SK-N-SH (cell line): ENCODE measurements at regions of chr11 and their contacts with region 1.

Region 1: GRCh38 chr11:44694443-44694842 is 32.3 kb upstream of the TSPAN18 start:
- DNase-seq: no peak
- H3K4me3 ChIP-seq: no peak overlapping the region
- H3K27ac ChIP-seq: peak overlapping the region in 1 of 2 experiments; percentile 93; a peak in 2 of 4 replicates
- H3K4me1 ChIP-seq: peaks cover 0 to 46% of the 10 kb centered on the region in 2 experiments; a peak in 2 of 4 replicates
- H3K27me3 ChIP-seq: no peaks in the 10 kb centered on the region
- CTCF ChIP-seq: no peak
- EP300 ChIP-seq: no peak
- RAD21 ChIP-seq: no peak

Region 2: DNA sequence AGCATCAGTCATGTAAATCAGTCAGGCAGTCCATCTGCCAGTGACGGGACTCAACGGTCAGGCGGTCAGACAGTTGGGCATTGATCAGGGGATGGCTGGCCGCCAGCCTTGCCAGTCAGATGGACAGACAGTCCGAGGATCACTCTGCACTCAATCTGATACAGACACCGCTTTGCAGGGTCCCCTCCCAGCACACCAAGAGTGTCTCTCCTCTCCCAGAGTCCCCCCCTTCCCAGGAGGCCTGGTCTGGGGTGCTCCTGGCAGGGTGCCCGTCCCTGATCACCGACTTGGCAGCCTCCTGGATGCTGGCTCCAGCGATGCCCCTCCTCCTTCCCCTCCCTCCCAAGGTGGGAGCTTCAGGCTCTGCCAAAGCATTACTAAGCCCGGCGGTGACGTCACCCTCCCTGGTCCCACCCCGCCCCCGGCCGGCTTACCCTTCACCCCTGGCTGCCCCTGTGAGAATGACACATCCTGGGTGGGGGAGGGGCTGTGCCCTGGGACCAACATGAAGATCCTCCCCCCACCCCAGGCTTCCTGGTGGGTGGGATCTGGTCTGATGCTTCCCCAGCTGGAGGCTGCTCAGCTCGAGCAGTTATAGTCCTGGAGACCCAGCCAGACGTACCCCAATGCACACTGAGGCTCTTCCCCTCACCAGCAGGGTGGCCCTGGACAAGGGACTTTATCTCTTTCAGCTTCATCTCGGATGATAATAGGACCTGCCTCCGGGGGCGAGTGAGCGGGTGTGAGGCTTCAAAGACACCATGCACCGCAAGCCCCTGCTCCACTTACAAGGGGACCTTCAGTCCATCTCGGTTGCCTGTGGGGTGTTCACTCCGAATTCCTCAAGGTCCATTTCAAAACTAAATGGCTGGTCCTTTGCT is 59.8 kb before region 1 on chr11:
- CTCF ChIA-PET with region 1: interaction called, 12 read pairs
- POLR2A ChIA-PET with region 1: interaction called, 10 read pairs
- DNase-seq: peak; percentile 90
- H3K4me3 ChIP-seq: peak overlapping the region; percentile 1 to 10; a peak in 1 of 4 replicates
- H3K27ac ChIP-seq: peak overlapping the region in 1 of 2 experiments; percentile 80; a peak in 2 of 4 replicates
- H3K4me1 ChIP-seq: peaks cover 5 to 20% of the 10 kb centered on the region in 2 experiments; a peak in 2 of 4 replicates
- H3K27me3 ChIP-seq: peaks cover 3% of the 10 kb centered on the region; the same call in 1 of the 2 replicates
- CTCF ChIP-seq: no peak
- EP300 ChIP-seq: no peak; a peak in 1 of 4 replicates
- RAD21 ChIP-seq: no peak; the same call in 1 of the 2 replicates

Region 3: DNA sequence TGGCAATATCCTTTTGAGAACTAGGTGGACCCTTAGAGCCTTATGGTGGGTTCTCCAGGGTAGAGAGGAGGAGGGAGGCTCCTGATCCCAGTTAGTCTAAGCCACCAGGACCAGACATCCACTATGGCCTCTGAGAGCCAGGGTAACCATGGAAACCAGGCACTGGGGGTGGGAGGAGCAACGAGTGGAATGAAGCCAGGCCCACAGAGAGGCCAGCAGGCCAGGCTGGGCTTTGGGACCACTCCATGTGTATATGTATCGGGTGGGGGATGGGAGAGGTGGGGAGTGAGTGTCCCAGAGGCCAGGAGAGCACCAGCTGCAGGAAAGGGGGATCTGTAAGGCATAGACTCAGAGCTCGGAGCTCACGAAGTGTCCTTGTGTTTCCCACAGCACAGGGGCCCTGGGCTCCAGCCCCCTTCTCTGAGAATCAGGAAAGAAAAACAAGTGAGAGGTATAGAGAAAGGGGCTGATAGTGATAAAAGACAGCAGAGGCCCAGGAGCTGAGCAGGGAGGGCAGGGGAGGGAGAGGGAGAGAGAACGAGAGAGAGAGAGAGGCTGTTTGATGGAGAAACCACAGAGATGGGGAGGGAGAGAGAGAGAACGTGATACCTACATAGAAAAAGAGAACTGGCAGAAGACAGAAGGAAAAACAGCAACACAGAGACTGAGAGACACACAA is 16.8 kb after region 1 on chr11:
- CTCF ChIA-PET with region 1: interaction called, 5 read pairs
- POLR2A ChIA-PET with region 1: interaction called, 13 read pairs
- DNase-seq: peak; percentile 87
- H3K4me3 ChIP-seq: no peak overlapping the region
- H3K27ac ChIP-seq: peak overlapping the region in 1 of 2 experiments; percentile 92; a peak in 2 of 4 replicates
- H3K4me1 ChIP-seq: peaks cover 0 to 23% of the 10 kb centered on the region in 2 experiments; a peak in 3 of 4 replicates
- H3K27me3 ChIP-seq: peaks cover 9% of the 10 kb centered on the region
- CTCF ChIP-seq: no peak
- EP300 ChIP-seq: no peak; a peak in 1 of 4 replicates
- RAD21 ChIP-seq: peak; percentile 28

Region 4: DNA sequence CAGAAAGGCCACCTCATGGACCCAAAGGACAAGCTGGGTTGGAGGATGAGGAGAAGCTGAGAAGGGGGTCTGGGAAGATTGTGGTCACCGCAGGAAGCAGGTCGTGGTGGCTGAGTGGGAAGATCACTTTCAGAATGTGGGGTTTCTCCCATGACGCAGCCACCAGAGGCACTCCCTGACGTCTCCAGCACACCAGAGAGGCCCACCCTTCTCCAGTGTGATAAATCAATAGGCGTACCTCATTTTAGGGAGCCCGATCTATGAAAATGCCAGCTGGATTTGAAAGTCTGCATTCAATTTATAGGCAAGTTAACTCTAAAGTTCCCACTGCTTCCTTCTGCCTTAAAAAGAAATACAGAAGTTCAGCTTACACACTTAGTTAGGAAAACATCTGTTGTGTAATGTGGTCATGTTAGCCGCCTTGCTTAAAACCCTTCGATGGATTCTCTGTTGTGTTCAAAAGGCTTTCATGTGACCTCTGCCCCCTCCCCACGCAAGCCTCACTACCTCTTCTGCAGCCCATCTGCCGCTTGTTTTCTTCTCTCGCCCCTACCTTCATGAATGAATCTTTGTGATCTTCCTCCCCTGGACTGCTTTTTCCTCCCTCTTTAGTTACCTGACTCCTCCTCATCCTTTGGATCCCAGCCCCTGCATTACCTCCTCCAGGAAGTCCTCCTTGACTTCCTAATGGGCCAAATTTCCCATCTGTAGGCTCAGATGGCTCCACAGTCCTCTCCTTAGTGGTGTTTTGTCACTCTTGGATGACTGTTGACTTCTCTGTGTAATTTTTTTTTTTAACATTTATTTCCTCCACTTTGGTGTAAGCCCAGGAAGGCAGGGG is 43.0 kb after region 1 on chr11:
- CTCF ChIA-PET with region 1: no interaction called
- POLR2A ChIA-PET with region 1: no interaction called
- DNase-seq: no peak
- H3K4me3 ChIP-seq: no peak overlapping the region
- H3K27ac ChIP-seq: peak overlapping the region in 1 of 2 experiments; percentile 22; a peak in 1 of 4 replicates
- H3K4me1 ChIP-seq: peaks cover 0 to 50% of the 10 kb centered on the region in 2 experiments; a peak in 3 of 4 replicates
- H3K27me3 ChIP-seq: peaks cover 12% of the 10 kb centered on the region
- CTCF ChIP-seq: no peak
- EP300 ChIP-seq: no peak
- RAD21 ChIP-seq: no peak

Region 5: DNA sequence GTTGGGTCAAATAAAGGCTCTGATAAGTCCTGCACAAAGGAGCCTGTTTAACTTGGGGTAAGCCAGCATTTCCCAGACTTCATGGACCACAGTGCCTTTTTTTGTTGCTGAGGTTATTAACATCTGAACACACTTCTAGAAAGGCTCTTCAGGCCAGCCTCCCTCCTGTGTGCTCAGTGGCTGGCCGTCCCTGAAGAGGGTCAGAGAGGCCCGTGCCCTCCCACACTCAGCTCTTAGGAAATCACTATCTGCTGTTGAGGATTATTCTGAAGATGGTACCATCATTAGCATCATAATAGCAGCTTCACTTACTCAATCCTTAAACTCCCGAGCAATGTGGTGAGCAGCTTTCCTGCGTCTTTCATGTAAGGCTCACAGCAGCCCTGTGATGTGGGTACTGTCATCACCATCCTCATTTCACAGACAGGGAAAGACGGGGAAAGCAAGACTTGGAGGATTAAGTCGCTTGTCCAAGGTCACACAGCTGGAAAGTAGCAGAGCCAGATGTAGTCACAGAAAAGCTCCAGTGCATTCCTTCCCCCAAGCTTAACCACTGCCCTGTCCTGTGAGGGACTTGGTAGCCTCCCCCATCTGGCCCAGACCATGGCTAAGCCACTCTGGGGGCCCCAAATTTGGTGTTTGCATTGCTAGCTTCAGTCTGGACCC is 103.6 kb after region 1 on chr11:
- CTCF ChIA-PET with region 1: no interaction called
- POLR2A ChIA-PET with region 1: no interaction called
- DNase-seq: no peak
- H3K4me3 ChIP-seq: no peak overlapping the region
- H3K27ac ChIP-seq: no peak overlapping the region
- H3K4me1 ChIP-seq: peaks cover 0 to 31% of the 10 kb centered on the region in 2 experiments; a peak in 2 of 4 replicates
- H3K27me3 ChIP-seq: peaks cover 23% of the 10 kb centered on the region
- CTCF ChIP-seq: no peak
- EP300 ChIP-seq: no peak
- RAD21 ChIP-seq: no peak